ENCODE measurements at regions of chr1 and their contacts with region 1.

Region 1: GRCh38 chr1:28736450-28737306 is at the start of gene YTHDF2:
- DNase-seq: peak; percentile 93
- H3K4me3 ChIP-seq: peak within 1 kb of the TSS; percentile 52 to 74
- H3K27ac ChIP-seq: peak within 1 kb of the TSS; percentile 82 to 89
- H3K4me1 ChIP-seq: peaks cover 5% of the 10 kb centered on the region
- H3K27me3 ChIP-seq: no peaks in the 10 kb centered on the region
- CTCF ChIP-seq: peak; percentile 93 to 95 (median 94)
- POLR2A ChIP-seq: peak; percentile 67
- total RNA-seq, gene YTHDF2: 51.5 to 86.5 TPM

Region 2: GRCh38 chr1:28642847-28643635 is 93.6 kb before region 1 on chr1 and contains the start of gene TAF12:
- intact Hi-C with region 1: loop called (anchors 2 kb)
- DNase-seq: peak; percentile 91
- H3K4me3 ChIP-seq: peak within 1 kb of the TSS; percentile 55 to 67
- H3K27ac ChIP-seq: peak within 1 kb of the TSS; percentile 81 to 83
- H3K4me1 ChIP-seq: no peaks in the 10 kb centered on the region
- H3K27me3 ChIP-seq: no peaks in the 10 kb centered on the region
- CTCF ChIP-seq: peak; percentile 24 to 67 (median 62)
- POLR2A ChIP-seq: peak; percentile 97
- total RNA-seq, gene TAF12: 11.7 to 16.1 TPM

Region 3: DNA sequence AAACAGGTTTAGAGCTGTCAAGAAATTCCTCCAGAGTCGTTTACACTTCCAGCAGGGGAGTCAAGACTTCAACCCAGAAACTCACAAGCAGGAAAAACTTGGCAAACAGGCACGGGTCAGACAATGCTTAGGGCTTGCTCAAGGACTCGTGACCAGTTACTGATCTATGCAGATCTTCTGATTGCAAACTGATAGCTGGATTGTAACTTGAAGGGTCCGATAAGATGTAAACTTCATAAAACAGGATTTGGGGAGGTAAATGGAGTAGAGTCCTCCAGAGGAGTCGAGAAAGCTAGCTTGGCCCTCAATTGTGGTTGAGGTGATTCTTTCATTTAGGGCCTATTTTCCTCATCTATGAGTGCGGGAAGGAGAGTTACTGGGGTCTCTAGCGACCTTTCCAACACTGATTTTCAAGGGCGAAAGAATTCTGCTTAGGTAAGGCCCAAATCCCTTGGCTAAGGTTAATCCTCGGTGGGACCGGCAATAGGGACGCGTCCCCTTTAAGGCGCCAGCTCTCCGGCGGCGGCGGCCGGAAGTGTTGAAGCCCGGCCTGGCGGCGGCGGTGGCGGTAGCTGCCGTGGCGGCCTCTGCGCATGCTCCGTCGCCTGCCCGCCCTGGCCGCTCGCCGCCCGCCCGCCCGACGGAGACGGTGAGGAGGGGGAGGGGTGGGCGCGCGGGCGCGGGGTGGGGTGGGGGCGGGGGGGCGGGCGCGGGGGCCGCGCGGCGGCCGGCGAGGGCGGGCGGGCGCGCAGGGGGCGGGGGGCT is 68.3 kb before region 1 on chr1 and contains the start of gene GMEB1:
- intact Hi-C with region 1: loop called (anchors 2 kb)
- DNase-seq: peak; percentile 78
- H3K4me3 ChIP-seq: peak within 1 kb of the TSS; percentile 57 to 93
- H3K27ac ChIP-seq: peak within 1 kb of the TSS; percentile 91 to 96
- H3K4me1 ChIP-seq: peaks cover 8% of the 10 kb centered on the region
- H3K27me3 ChIP-seq: no peaks in the 10 kb centered on the region
- CTCF ChIP-seq: peak in 2 of 4 experiments; percentile 28 to 50
- POLR2A ChIP-seq: peak; percentile 33
- total RNA-seq, gene GMEB1: 7.9 to 13.2 TPM

Measured in prostate gland (tissue), 2 donors.